GM12878 (cell line): ENCODE measurements at regions of chr5 and their contacts with region 1.

Region 1: DNA sequence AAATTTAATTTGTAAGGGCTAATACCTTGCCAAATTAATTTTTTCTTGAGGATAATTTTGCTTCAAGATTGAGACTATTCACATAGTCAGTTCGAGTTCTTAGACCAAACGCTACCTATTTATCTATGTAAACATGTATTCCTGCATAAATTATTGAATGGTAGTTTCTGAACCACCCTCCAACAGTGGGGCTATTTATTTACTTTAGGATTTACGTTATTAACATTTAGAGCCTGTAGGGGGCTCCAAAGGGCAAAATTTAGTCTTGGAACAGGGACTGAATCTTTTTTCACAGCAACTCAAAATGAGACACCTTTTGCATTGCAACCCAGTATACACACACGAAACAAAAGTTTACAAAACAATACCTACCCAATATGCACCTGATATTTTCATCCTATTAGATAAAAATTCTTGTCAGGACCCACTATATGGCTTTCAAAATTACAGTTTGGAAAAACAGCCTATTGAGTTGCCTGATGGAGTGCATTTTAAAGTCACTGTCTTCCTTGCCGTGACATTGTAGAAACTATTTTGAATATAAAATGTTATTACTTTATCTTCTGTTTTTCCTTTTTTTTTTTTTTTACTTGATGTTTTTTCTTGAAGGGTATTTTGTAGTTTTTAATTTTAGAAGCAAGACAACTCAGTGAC is 47.1 kb upstream of the POU4F3 start:
- DNase-seq: no peak
- ATAC-seq: peak; percentile 94
- H3K4me3 ChIP-seq: no peak overlapping the region
- H3K27ac ChIP-seq: no peak overlapping the region
- H3K4me1 ChIP-seq: no peaks in the 10 kb centered on the region
- H3K27me3 ChIP-seq: no peaks in the 10 kb centered on the region
- CTCF ChIP-seq: peak; percentile 51 to 60 (median 59); a peak in 5 of 6 replicates
- EP300 ChIP-seq: no peak
- POLR2A ChIP-seq: no peak
- RAD21 ChIP-seq: peak; percentile 53

Region 2: GRCh38 chr5:146426853-146427618 is 135.5 kb after region 1 on chr5:
- CTCF ChIA-PET with region 1: interaction called, 10 read pairs
- POLR2A ChIA-PET with region 1: no interaction called
- RAD21 ChIA-PET with region 1: no interaction called
- SMC1A ChIA-PET with region 1: no interaction called
- in situ Hi-C with region 1: loop called (anchors 25 kb)
- intact Hi-C with region 1: loop called (anchors 1 kb)
- DNase-seq: no peak
- ATAC-seq: peak; percentile 88
- H3K4me3 ChIP-seq: no peak overlapping the region
- H3K27ac ChIP-seq: no peak overlapping the region
- H3K4me1 ChIP-seq: no peaks in the 10 kb centered on the region
- H3K27me3 ChIP-seq: no peaks in the 10 kb centered on the region; a peak in 2 of 4 replicates
- CTCF ChIP-seq: peak; percentile 57 to 77 (median 62); a peak in 5 of 6 replicates
- EP300 ChIP-seq: no peak
- POLR2A ChIP-seq: no peak
- RAD21 ChIP-seq: peak; percentile 82

Region 3: DNA sequence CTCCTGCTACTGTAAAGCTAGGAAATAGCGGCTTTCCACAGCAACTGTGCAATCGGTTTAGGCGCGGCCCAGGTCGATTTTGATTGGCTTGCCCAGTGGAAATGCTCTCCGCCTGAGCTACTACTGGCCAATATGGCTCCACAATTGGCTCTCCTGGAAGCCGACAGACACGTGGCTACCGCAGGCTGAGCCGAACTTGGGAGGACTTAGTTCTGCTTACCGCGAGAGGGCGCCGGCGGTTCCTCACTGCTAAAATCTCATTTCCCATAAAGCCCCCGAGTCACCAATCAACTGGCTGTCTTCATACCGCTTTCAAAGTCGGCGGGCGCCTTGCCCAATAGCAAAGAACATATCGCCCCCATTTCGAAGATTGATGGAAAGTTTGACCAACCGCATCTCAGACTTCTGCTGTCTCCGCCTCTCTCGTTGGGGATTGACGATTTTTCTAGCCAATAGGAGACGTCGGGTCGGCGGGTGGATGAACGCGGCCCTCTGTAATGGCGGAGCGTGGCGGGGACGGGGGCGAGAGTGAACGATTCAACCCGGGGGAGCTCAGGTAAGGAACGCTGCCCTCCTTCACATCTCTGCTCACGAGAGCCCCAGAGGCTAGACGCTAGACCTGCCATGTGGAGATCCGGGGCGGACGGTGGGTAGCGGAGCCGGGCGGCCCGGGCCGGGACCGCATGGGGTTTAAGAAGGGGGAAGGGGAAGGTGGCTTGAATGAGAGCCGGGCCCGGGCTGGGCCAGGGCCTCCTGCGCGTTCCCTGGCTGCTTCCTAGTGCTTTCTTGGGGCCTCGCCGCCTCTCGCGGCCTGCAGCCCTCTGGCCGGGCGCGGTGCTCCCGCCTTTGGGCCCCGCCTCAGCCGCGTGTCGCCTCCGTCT is 155.5 kb after region 1 on chr5 and contains the start of gene TCERG1:
- CTCF ChIA-PET with region 1: interaction called, 3 read pairs
- POLR2A ChIA-PET with region 1: no interaction called
- RAD21 ChIA-PET with region 1: no interaction called
- SMC1A ChIA-PET with region 1: interaction called, 3 read pairs
- in situ Hi-C with region 1: loop called (anchors 25 kb)
- intact Hi-C with region 1: no loop called
- DNase-seq: peak; percentile 98
- ATAC-seq: peak; percentile 92
- H3K4me3 ChIP-seq: peak within 1 kb of the TSS; percentile 75
- H3K27ac ChIP-seq: peak within 1 kb of the TSS; percentile 94
- H3K4me1 ChIP-seq: no peaks in the 10 kb centered on the region
- H3K27me3 ChIP-seq: no peaks in the 10 kb centered on the region
- CTCF ChIP-seq: peak; percentile 60 to 88 (median 75)
- EP300 ChIP-seq: no peak
- POLR2A ChIP-seq: peak; percentile 87
- RAD21 ChIP-seq: no peak
- polyA plus RNA-seq, gene TCERG1: 51.5 to 65.8 TPM